CD8-positive, alpha-beta T cell (primary cell): ENCODE measurements at regions of chr14 and their contacts with region 1.

Region 1: DNA sequence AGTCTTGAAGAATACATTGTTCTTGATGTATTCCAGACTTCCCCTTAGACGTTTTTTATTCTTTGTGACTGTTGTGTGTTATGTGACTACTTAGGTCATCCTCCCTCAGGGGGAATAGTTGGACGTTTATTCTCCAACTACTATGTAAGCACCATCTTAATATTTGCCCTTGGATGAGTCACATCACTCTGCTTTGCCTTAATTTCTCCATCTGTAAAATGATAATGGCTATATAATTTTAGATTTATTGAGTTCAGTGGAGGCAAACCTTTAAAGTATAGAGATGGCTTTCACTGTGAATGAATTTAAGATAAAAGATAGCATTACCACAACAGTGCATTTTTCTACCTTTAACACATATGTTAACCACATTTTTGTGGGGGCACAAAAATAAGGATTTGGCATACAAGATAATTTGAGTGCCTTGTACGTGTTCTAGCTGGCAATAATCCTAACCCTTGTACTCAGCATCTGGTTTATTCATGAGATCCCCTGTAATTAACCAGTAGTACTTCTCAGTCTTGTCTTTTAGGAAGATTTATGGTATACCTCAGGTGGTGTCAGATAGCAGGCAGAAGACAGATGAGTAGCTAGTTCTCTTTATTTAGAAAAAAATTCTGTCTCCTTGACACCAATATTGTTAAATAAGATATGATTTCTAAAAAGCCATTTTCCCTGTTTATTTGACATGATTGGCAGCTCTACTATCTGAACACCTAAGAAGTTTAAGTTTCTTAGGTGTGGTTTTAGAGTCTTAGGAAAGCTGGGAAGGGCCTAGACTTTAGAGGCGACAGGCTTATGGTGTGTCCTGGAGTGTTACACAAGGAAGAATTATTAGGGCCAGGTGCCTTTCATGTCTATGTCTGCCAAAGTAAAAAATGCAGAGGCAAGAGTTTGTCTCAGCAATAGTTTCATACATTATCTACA is 152.3 kb downstream of the RAD51B start:
- DNase-seq: no peak
- ATAC-seq: no peak
- H3K4me3 ChIP-seq: no peak overlapping the region
- H3K4me3 Mint-ChIP-seq: no peak overlapping the region
- H3K27ac ChIP-seq: no peak overlapping the region
- H3K27ac Mint-ChIP-seq: no peak overlapping the region
- H3K4me1 ChIP-seq: no peaks in the 10 kb centered on the region
- H3K4me1 Mint-ChIP-seq: no peaks in the 10 kb centered on the region
- H3K27me3 ChIP-seq: no peaks in the 10 kb centered on the region
- H3K27me3 Mint-ChIP-seq: no peaks in the 10 kb centered on the region
- CTCF ChIP-seq: no peak

Region 2: DNA sequence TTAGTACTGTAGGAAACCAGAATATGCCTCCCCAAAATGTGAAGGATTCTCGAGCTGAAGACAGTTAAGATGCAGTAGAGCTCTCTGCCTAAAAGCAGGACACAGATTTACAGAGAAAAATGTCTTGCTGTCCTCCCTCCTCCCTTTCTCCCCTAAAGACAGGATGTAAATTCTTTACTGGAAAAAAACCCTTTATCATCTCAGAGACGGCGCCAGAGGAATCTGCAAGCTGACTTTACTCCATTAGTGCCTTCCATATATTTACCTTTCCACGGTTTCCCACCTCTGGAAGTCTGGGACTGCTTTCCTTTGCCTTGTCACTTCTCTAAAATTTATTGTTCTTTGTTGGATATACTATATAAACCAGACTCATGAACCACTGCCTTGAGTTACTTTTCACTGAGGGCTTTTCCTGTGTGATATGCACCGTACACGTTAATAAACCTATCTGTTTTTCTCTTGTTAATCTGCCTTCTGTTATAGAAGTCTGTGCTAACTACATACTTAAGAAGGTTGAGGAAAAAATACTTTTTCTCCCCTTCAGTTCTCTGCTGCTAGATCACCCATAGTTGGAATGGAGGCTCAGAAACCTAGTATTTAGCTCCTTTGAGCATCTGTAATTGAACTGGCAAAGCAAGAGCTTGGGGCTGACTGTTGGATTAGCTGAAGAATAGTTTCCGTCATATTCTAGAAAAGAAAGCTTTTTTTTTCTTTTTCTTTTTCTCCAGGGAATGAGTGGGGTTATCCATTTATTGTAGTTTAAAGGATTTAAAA is 52.4 kb before region 1 on chr14:
- CTCF ChIA-PET with region 1: no interaction called
- POLR2A ChIA-PET with region 1: no interaction called
- intact Hi-C with region 1: no loop called
- DNase-seq: no peak
- ATAC-seq: no peak
- H3K4me3 ChIP-seq: no peak overlapping the region
- H3K4me3 Mint-ChIP-seq: no peak overlapping the region
- H3K27ac ChIP-seq: no peak overlapping the region
- H3K27ac Mint-ChIP-seq: no peak overlapping the region
- H3K4me1 ChIP-seq: no peaks in the 10 kb centered on the region
- H3K4me1 Mint-ChIP-seq: no peaks in the 10 kb centered on the region
- H3K27me3 ChIP-seq: no peaks in the 10 kb centered on the region
- H3K27me3 Mint-ChIP-seq: no peaks in the 10 kb centered on the region
- CTCF ChIP-seq: no peak

Region 3: DNA sequence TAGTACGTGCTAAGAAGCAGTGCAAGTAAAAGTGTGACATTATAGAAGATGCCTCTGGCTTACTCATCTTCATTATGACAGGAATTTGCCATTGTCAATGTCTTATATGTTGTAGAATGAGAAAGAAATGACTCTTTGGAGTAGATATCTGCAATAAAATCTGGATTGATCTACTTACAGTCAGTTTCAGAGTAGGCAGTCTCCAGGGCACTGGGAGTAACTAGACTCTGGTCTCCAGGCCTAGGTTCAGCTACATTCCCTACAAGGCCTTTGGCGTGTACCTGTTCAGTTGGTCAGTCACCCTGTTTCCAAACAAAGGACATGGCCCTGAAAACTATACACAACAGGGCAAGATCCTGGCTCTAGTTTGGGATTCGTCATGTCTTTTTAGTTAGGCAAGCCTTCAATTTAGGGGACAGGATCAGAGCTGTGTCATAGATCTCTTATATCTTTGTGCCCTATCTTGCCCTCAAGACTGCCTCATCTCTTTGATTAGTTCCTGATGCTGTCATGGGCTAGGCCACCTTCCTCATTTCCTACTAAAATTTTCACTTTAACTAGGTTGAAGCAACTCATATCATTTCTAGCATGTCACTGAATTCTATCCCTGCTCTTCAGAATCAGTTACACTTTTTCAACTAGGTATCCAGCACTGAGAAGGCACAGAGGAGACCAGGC is 257.7 kb after region 1 on chr14:
- CTCF ChIA-PET with region 1: no interaction called
- POLR2A ChIA-PET with region 1: no interaction called
- intact Hi-C with region 1: loop called in 1 of 2 experiments (anchors 10 kb)
- DNase-seq: no peak
- ATAC-seq: no peak
- H3K4me3 ChIP-seq: no peak overlapping the region
- H3K4me3 Mint-ChIP-seq: no peak overlapping the region
- H3K27ac ChIP-seq: no peak overlapping the region
- H3K27ac Mint-ChIP-seq: no peak overlapping the region
- H3K4me1 ChIP-seq: no peaks in the 10 kb centered on the region
- H3K4me1 Mint-ChIP-seq: no peaks in the 10 kb centered on the region
- H3K27me3 ChIP-seq: no peaks in the 10 kb centered on the region
- H3K27me3 Mint-ChIP-seq: no peaks in the 10 kb centered on the region
- CTCF ChIP-seq: no peak